SK-N-SH (cell line): ENCODE measurements at regions of chr4 and their contacts with region 1.

Region 1: DNA sequence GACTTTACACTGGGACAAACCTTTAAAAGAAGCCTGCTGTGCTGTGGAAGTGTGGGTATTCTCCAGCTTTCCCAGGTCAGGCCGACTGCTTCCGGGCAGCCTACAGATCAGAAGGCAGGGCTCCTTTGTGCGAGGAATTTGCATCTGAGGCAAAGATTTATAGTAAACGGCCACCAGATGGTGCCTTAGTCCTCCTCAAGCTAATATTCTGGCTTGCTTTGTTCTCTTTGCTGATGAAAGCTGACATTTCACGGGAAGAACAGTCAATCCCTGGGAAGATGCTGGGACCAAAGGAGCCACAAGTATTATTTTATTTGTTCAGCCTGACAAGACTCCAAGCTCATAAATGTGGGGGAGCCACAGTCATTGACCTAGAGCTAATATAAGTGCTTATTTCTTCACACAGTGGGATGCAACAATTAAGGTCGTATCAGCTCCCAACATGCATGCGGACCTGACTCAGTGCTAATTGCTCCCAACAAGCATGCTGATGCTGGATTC is 120.7 kb upstream of the TRIM2 start:
- DNase-seq: peak; percentile 72
- H3K4me3 ChIP-seq: no peak overlapping the region; a peak in 1 of 4 replicates
- H3K27ac ChIP-seq: no peak overlapping the region
- H3K4me1 ChIP-seq: peaks cover 4 to 11% of the 10 kb centered on the region in 2 experiments; a peak in 2 of 4 replicates
- H3K27me3 ChIP-seq: no peaks in the 10 kb centered on the region
- CTCF ChIP-seq: peak; percentile 70
- EP300 ChIP-seq: no peak
- RAD21 ChIP-seq: peak; percentile 84

Region 2: GRCh38 chr4:152850377-152850776 is 233.1 kb before region 1 on chr4:
- CTCF ChIA-PET with region 1: interaction called, 31 read pairs
- POLR2A ChIA-PET with region 1: no interaction called
- DNase-seq: no peak
- H3K4me3 ChIP-seq: no peak overlapping the region
- H3K27ac ChIP-seq: no peak overlapping the region
- H3K4me1 ChIP-seq: no peaks in the 10 kb centered on the region
- H3K27me3 ChIP-seq: no peaks in the 10 kb centered on the region
- CTCF ChIP-seq: no peak
- EP300 ChIP-seq: no peak
- RAD21 ChIP-seq: no peak

Region 3: DNA sequence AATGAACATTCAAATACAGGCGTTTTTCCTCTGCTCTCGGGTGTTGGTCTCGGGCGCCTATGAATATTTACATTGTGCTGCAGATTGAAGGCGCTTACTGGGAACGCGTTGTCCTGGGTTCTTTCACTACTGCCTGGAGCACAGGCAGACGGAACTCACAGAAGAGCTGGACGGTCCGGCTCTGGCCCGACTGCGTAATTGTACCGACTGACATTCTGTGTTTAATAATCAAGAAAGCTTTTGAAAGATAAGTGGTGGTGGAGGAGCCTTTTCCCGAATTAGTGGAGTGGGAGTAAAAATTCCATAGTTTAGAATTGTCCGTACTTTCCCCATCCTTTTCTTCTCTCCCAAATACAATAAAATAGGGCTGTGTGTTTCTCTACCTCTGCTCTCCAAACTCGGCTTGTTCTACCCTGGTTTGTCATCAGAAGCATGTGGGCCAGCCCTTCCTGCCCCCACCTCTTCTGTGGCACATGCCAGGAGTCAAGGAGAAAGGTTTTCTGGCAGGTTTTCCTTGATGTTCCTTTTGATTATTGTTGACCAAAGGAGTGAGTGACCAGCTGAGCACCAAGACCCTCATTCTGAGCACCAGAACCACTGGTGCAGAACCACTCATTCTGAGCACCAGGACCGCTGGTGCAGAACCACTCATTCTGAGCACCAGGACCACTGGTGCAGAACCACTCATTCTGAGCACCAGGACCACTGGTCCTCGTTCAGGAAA is 145.1 kb before region 1 on chr4:
- CTCF ChIA-PET with region 1: interaction called, 12 read pairs
- POLR2A ChIA-PET with region 1: no interaction called
- DNase-seq: no peak
- H3K4me3 ChIP-seq: peak overlapping the region; percentile 55 to 63
- H3K27ac ChIP-seq: no peak overlapping the region
- H3K4me1 ChIP-seq: peaks cover 0 to 5% of the 10 kb centered on the region in 2 experiments; a peak in 1 of 4 replicates
- H3K27me3 ChIP-seq: peaks cover 34% of the 10 kb centered on the region
- CTCF ChIP-seq: no peak
- EP300 ChIP-seq: no peak
- RAD21 ChIP-seq: no peak

Region 4: GRCh38 chr4:153005899-153006381 is 77.6 kb before region 1 on chr4:
- CTCF ChIA-PET with region 1: no interaction called
- POLR2A ChIA-PET with region 1: no interaction called
- DNase-seq: no peak
- H3K4me3 ChIP-seq: no peak overlapping the region
- H3K27ac ChIP-seq: no peak overlapping the region
- H3K4me1 ChIP-seq: no peaks in the 10 kb centered on the region
- H3K27me3 ChIP-seq: no peaks in the 10 kb centered on the region; the same call in 1 of the 2 replicates
- CTCF ChIP-seq: no peak
- EP300 ChIP-seq: no peak
- RAD21 ChIP-seq: no peak

Region 5: DNA sequence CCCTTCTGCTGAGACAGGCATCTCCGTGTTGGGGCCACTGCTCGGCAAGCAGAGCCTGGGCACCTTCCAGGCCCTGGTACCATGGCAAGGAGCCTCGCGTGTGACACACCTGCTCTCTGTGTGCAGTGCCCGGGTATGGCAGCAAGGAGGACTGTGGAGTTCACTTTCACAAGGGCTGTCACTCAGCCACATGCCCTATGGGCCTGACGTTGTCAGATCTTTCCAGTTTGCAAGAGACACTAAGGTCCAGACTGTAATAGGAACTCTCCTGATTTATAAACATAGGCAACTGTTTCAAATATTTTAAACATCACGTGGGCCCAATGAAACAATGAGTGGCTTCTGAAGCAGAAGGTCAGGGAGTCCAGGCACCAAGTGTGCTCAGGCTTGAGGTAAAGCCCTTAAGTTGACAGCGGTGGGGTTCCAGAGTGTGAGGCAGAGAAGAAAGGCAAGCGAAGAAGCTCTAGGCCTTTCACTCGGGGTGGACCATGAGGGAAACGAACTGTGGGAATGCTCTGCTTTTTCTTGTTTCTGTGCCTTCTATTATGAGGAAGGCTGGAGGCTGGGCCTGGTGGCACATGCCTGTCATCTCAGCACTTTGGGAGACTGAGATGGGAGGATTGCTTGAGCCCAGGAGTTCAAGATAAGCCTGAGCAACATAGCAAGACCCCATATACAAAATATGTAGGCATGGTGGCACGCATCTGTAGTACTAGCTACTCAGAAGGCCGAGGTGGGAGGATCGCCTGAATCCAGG is 12.1 kb after region 1 on chr4:
- CTCF ChIA-PET with region 1: interaction called, 76 read pairs
- POLR2A ChIA-PET with region 1: no interaction called
- DNase-seq: no peak
- H3K4me3 ChIP-seq: no peak overlapping the region
- H3K27ac ChIP-seq: no peak overlapping the region
- H3K4me1 ChIP-seq: no peaks in the 10 kb centered on the region
- H3K27me3 ChIP-seq: no peaks in the 10 kb centered on the region
- CTCF ChIP-seq: no peak
- EP300 ChIP-seq: no peak
- RAD21 ChIP-seq: no peak

Region 6: GRCh38 chr4:153107246-153107645 is 23.7 kb after region 1 on chr4:
- CTCF ChIA-PET with region 1: interaction called, 17 read pairs
- POLR2A ChIA-PET with region 1: no interaction called
- DNase-seq: no peak
- H3K4me3 ChIP-seq: no peak overlapping the region
- H3K27ac ChIP-seq: no peak overlapping the region
- H3K4me1 ChIP-seq: no peaks in the 10 kb centered on the region; a peak in 1 of 4 replicates
- H3K27me3 ChIP-seq: no peaks in the 10 kb centered on the region
- CTCF ChIP-seq: no peak
- EP300 ChIP-seq: no peak
- RAD21 ChIP-seq: no peak

Region 7: DNA sequence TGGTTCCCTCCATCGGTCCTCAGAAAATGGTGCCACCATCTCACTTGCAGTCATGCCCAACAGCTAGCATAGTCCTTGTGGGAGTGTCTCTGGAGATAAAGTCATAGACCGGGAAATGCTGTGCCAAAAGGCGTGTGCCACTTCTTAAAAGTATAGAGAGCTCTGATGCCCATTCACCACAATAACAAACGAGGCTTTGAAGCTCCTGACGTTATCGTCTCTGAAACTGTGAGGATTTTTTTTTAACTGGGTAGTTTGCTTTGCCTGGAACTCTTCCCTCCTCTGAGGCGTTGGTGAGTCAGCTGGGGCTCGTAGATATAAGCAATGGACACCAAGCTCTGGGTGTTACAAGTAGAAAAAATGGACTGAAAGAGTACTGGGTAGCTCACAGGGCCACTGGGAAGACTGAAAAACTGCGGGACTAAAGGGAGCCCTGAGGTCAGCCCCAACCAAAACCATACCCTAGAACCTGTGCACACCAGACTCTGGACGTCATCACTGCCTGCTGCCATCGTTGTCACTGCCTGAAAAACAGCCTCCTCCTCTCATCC is 31.3 kb after region 1 on chr4:
- CTCF ChIA-PET with region 1: interaction called, 15 read pairs
- POLR2A ChIA-PET with region 1: no interaction called
- DNase-seq: no peak
- H3K4me3 ChIP-seq: no peak overlapping the region
- H3K27ac ChIP-seq: peak overlapping the region in 1 of 2 experiments; percentile 38; a peak in 2 of 4 replicates
- H3K4me1 ChIP-seq: peaks cover 0 to 9% of the 10 kb centered on the region in 2 experiments; a peak in 3 of 4 replicates
- H3K27me3 ChIP-seq: no peaks in the 10 kb centered on the region
- CTCF ChIP-seq: no peak
- EP300 ChIP-seq: no peak
- RAD21 ChIP-seq: no peak

Region 8: DNA sequence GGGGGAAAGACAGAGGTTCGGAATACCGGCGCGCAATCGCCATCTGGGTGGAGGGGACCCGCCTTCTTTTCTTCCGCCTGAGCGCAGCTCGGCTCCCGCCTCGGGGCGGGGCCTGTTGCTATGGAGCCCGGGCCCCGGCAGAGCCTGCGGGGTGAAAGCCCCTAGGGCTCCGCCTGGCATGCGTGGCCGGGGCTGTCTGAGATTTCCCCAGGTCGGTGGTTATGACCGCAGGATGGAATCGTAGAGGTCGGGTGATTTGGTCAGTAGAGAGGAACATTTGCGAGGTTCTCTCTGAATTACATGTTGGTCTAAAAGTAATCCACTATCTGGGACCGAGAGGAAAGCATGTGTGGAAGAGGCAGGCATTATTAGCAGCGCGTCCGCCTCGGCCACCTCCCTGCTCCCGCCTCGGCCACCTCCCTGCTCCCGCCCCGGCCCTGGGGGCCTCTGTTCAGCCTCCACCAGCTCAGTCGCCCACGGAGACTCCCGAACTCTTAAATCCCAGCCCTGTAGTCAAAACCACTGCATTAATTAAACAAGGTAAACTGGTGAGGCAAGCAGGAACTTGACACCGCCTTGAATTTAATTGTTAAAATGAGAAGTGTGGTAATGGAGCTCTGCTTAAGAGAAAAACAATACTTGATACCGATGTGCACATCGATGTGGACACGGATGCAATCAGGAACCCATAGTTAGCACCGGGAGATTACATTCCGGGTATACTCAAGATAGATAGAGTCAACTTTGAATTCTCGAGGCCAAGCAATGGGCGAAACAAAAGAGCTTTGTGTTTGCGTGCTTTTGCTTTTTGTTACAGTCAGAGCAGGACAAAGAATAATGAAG is 165.9 kb after region 1 on chr4:
- CTCF ChIA-PET with region 1: no interaction called
- POLR2A ChIA-PET with region 1: no interaction called
- DNase-seq: peak; percentile 94
- H3K4me3 ChIP-seq: peak overlapping the region; percentile 60 to 76
- H3K27ac ChIP-seq: peak overlapping the region; percentile 68 to 82
- H3K4me1 ChIP-seq: peaks cover 4 to 18% of the 10 kb centered on the region in 2 experiments; a peak in 1 of 4 replicates
- H3K27me3 ChIP-seq: no peaks in the 10 kb centered on the region
- CTCF ChIP-seq: no peak
- EP300 ChIP-seq: no peak
- RAD21 ChIP-seq: no peak

Region 9: GRCh38 chr4:153318696-153319320 is 235.3 kb after region 1 on chr4:
- CTCF ChIA-PET with region 1: interaction called, 20 read pairs
- POLR2A ChIA-PET with region 1: no interaction called
- DNase-seq: peak; percentile 74
- H3K4me3 ChIP-seq: no peak overlapping the region
- H3K27ac ChIP-seq: no peak overlapping the region
- H3K4me1 ChIP-seq: peaks cover 6 to 7% of the 10 kb centered on the region in 2 experiments; a peak in 2 of 4 replicates
- H3K27me3 ChIP-seq: no peaks in the 10 kb centered on the region
- CTCF ChIP-seq: peak; percentile 83
- EP300 ChIP-seq: no peak
- RAD21 ChIP-seq: peak; percentile 91